Posterior vena cava (tissue), 2 donors: ENCODE measurements at regions of chr1 and their contacts with region 1.

Region 1: DNA sequence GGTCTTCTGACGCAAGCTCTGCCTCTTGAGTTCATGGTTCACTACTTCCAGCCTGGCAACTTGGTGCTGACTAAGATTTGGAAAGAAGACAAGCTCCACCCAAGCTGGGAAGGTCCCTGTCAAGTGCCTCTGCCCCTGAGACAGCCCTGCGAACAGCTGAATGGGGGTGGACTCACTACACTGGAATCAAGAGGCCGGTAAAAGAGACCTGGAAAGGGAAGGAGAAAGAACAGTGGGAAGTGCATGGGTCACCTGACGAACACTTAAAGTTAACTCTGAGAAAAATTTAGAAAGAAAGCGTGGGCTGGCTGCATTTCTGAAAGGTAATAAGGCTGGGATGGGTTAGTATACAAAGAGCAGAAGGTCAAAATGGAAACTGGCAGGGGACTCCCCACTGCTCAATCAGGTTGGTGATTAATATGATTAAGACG is 26.1 kb upstream of the ZNF496 start:
- DNase-seq: peak; percentile 53

Region 2: DNA sequence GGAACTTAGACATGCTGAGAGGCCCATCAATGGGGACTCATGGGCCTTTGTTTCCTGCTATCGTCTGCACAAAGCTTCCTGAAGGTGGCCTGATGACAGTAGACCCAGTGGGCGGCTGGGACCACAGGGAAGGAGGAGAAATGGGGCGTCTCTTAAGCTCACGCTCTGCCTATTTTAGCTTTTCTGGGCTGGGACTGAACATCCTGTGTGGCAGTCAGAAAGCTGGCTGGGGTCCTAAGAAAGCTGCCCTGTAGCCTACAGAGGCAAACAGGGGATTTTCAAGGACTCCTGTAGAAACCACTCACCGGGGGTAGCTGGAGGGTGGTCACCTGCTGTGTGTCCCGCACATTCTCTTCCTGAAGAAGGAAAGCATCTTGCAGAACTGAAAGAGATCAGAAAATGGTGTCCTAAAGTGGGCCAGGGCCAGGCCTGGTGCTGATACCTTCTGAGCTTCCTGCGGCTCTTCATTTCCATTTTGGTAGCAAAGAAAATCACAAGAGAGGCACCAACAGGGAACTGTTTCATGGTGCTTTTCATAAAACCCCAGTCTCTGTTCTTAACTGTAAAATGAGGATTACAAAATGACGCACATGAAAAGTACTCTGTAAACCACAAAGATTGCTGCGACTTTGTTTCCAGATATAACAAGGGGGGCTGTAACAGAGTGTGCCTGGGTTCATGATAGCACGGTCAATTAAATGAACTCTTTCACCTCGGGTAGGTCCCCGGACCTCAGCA is 34.8 kb before region 1 on chr1:
- intact Hi-C with region 1: no loop called
- DNase-seq: no peak

Region 3: GRCh38 chr1:247942624-247943023 is 584.8 kb after region 1 on chr1:
- intact Hi-C with region 1: loop called in 1 of 2 experiments (anchors 10 kb)
- DNase-seq: no peak